ENCODE measurements at regions of chr22 and their contacts with region 1.

Region 1: GRCh38 chr22:46674367-46674781 is 54.2 kb downstream of the GRAMD4 start:
- DNase-seq: peak; percentile 100
- H3K4me3 Mint-ChIP-seq: peak overlapping the region; percentile 80
- H3K27ac Mint-ChIP-seq: peak overlapping the region; percentile 93
- H3K4me1 Mint-ChIP-seq: peaks cover 54% of the 10 kb centered on the region
- H3K27me3 Mint-ChIP-seq: no peaks in the 10 kb centered on the region

Region 2: DNA sequence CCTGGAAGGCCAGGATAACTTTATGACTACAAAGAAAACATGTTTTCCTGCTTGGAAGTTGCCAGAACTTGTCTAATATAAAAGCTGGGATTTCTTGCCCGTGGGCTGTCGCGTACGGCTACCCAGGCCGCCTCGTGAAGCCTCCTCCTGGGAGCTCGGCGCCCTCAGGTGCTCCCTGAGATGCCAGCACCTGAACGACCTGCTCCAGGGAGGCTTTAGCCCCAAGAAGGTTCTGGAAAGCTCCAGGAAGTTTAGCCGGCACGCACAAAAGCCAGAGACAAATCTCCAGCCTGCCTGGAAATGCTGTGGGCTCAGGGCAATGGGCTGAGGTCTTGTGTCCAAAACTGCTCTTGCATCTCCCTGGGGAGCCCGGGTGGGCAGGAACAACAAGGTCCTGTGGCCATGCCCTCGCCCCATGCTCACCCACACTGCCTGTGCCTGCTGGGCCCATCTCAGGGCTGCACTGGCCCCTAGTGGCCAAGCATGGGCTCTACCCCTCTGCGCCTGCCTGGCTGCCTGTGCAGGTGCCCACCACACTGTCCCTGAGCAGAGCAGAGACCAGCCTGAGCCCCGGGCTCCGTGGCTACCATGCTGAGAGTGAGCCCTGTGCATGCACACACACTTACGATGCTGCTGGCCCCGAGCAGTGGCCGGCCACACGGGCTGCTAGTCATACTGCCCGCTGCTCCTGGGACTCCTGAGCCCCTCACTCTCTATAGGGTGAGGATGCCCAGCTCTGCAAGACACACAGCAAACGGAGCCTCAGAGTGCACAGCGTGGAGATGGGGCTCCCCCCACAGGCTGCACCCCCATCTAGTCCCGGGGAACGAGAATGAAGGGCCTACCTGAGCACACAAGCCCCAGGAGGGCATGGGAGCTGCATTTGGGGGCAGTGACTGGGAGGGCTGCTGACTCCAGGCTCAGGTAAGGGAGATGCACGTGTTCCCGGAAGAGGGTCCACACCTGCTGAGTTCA is 132.1 kb before region 1 on chr22:
- CTCF ChIA-PET with region 1: no interaction called
- intact Hi-C with region 1: no loop called
- DNase-seq: peak; percentile 79
- H3K4me3 Mint-ChIP-seq: no peak overlapping the region
- H3K27ac Mint-ChIP-seq: no peak overlapping the region
- H3K4me1 Mint-ChIP-seq: peaks cover 12% of the 10 kb centered on the region
- H3K27me3 Mint-ChIP-seq: peaks cover 21% of the 10 kb centered on the region

Region 3: GRCh38 chr22:46592390-46592872 is 81.9 kb before region 1 on chr22:
- CTCF ChIA-PET with region 1: no interaction called
- intact Hi-C with region 1: loop called (anchors 5 kb)
- DNase-seq: peak; percentile 72
- H3K4me3 Mint-ChIP-seq: peak overlapping the region; percentile 36
- H3K27ac Mint-ChIP-seq: peak overlapping the region; percentile 46
- H3K4me1 Mint-ChIP-seq: peaks cover 24% of the 10 kb centered on the region
- H3K27me3 Mint-ChIP-seq: no peaks in the 10 kb centered on the region

Region 4: DNA sequence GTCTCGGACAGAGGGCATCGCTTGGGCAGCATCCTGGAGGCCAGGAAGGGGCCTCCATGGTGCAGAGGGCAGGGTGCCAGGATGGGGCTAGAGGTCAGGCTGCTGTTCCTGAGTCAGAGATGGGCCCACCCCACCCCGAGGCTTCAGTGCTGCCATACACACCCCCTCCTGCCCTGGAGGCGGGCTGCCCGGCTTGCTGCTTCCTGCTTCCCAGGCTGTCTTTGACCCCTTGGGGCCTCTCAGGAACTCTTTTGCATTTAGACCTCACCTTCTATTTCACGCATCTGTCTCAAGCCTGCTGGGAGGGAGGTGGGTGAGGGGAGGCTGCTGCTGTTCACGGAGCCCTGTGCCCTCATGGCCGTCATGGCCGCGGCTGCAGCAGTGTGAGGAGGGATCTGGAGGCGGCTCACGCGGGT is 60.8 kb before region 1 on chr22:
- CTCF ChIA-PET with region 1: interaction called, 4 read pairs
- intact Hi-C with region 1: loop called (anchors 1 kb)
- DNase-seq: peak; percentile 64
- H3K4me3 Mint-ChIP-seq: peak overlapping the region; percentile 85
- H3K27ac Mint-ChIP-seq: peak overlapping the region; percentile 91
- H3K4me1 Mint-ChIP-seq: peaks cover 26% of the 10 kb centered on the region
- H3K27me3 Mint-ChIP-seq: no peaks in the 10 kb centered on the region

Region 5: GRCh38 chr22:46661221-46661851 is 13.0 kb before region 1 on chr22:
- CTCF ChIA-PET with region 1: no interaction called
- intact Hi-C with region 1: loop called (anchors 1 kb)
- DNase-seq: peak; percentile 77
- H3K4me3 Mint-ChIP-seq: no peak overlapping the region
- H3K27ac Mint-ChIP-seq: peak overlapping the region; percentile 81
- H3K4me1 Mint-ChIP-seq: peaks cover 22% of the 10 kb centered on the region
- H3K27me3 Mint-ChIP-seq: no peaks in the 10 kb centered on the region

Region 6: DNA sequence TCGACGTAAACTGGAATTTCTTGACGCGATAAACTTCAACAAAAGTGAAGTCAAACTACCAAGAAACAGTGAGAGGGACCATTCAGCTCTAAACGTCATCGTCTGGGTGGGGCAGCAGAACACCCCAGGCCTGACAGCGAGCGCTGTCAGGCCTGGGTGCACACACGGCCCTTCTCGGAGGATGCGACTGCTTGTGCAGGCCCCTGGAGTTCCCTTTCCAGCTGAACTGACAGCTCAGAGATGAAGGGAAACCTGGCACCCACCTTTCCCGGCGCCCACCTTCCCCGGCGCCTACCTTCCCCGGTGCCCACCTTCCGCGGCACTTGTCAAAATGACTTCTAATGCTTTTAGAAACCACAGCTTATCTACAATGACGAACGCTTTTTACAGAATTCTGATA is 15.8 kb after region 1 on chr22:
- CTCF ChIA-PET with region 1: no interaction called
- intact Hi-C with region 1: no loop called
- DNase-seq: no peak
- H3K4me3 Mint-ChIP-seq: no peak overlapping the region
- H3K27ac Mint-ChIP-seq: no peak overlapping the region
- H3K4me1 Mint-ChIP-seq: peaks cover 13% of the 10 kb centered on the region
- H3K27me3 Mint-ChIP-seq: no peaks in the 10 kb centered on the region

Region 7: DNA sequence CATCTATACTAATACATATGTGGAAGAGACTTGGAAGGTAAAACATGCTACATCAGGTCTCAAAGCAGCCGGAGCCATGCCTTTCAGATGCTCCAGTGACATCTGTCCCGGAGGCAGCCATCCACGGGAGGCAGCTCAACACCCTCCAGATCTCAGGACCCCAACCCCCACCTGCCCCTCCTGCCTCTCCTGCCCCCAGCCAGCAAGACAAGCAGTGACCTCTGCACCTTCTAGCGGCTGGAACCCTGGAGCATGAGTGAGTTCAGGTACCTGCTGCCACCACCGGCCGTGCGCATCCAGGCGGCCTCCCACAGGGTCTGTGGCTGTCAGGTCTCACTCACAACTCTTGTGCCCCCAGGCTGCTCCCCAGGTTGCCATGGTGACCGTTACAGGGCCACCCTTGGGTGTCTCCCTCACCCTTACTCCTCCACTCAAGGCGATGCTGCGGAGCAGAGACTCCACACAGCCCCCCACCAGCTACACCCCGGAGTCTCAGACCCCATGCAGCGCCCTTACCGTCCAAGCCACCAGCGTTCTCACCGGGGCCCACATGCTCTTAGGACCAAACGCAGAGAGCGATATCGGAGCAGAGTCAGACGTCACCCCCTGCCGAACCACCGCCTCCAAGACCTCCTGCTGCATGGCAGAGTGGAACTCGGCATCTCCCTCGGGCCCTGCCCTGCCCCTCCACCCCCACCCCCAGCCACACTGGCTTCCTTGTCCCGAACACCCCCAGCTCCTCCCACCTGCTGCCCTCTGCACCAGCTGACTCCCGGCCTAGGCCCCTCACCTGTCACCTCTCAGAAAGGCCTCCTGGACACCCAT is 29.0 kb after region 1 on chr22:
- CTCF ChIA-PET with region 1: no interaction called
- intact Hi-C with region 1: no loop called
- DNase-seq: no peak
- H3K4me3 Mint-ChIP-seq: no peak overlapping the region
- H3K27ac Mint-ChIP-seq: no peak overlapping the region
- H3K4me1 Mint-ChIP-seq: no peaks in the 10 kb centered on the region
- H3K27me3 Mint-ChIP-seq: no peaks in the 10 kb centered on the region

Region 8: DNA sequence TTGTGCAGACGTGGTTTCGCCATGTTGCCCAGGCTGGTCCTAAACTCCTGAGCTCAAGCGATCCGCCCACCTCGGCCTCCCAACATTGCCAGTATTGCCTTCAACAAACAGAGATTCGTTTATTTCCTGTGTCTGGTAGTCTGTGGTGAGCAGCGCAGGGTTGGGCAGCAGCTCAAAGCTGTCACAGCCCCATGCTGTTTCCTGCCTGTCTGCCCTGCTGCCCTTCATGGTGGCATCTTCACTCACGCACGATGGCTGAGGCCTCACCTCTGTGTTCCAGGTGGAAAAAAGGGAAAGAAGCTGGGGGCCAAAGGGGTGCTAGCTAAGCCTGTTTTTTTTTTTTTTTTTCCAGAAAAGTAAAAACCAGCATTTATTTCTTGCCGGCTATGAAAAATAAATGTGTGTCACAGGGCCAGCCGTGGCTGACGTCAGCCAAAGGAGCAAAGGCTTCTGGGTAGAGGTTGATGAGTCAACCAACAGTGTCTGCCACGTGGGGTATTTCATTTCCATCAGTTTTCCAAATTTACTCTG is 116.9 kb after region 1 on chr22:
- CTCF ChIA-PET with region 1: no interaction called
- intact Hi-C with region 1: loop called (anchors 1 kb)
- DNase-seq: peak; percentile 89
- H3K4me3 Mint-ChIP-seq: peak overlapping the region; percentile 84
- H3K27ac Mint-ChIP-seq: peak overlapping the region; percentile 99
- H3K4me1 Mint-ChIP-seq: peaks cover 40% of the 10 kb centered on the region
- H3K27me3 Mint-ChIP-seq: no peaks in the 10 kb centered on the region